ENCODE measurements at regions of chr19 and their contacts with region 1.

Region 1: GRCh38 chr19:55632463-55632834 is 8.1 kb upstream of the ZNF784 start:
- DNase-seq: peak; percentile 91
- H3K4me3 ChIP-seq: no peak overlapping the region
- H3K27ac ChIP-seq: no peak overlapping the region
- H3K4me1 ChIP-seq: peaks cover 12% of the 10 kb centered on the region
- H3K27me3 ChIP-seq: no peaks in the 10 kb centered on the region
- CTCF ChIP-seq: peak; percentile 67 to 75
- POLR2A ChIP-seq: no peak

Region 2: GRCh38 chr19:55146078-55146704 is 486.3 kb before region 1 on chr19:
- CTCF ChIA-PET with region 1: interaction called, 9 read pairs
- POLR2A ChIA-PET with region 1: no interaction called
- dilution Hi-C with region 1: no loop called
- intact Hi-C with region 1: loop called (anchors 5 kb)
- DNase-seq: no peak
- H3K4me3 ChIP-seq: no peak overlapping the region
- H3K27ac ChIP-seq: no peak overlapping the region
- H3K4me1 ChIP-seq: no peaks in the 10 kb centered on the region
- H3K27me3 ChIP-seq: peaks cover 7 to 15% of the 10 kb centered on the region in 2 experiments
- CTCF ChIP-seq: peak; percentile 34 to 55
- POLR2A ChIP-seq: no peak

Region 3: DNA sequence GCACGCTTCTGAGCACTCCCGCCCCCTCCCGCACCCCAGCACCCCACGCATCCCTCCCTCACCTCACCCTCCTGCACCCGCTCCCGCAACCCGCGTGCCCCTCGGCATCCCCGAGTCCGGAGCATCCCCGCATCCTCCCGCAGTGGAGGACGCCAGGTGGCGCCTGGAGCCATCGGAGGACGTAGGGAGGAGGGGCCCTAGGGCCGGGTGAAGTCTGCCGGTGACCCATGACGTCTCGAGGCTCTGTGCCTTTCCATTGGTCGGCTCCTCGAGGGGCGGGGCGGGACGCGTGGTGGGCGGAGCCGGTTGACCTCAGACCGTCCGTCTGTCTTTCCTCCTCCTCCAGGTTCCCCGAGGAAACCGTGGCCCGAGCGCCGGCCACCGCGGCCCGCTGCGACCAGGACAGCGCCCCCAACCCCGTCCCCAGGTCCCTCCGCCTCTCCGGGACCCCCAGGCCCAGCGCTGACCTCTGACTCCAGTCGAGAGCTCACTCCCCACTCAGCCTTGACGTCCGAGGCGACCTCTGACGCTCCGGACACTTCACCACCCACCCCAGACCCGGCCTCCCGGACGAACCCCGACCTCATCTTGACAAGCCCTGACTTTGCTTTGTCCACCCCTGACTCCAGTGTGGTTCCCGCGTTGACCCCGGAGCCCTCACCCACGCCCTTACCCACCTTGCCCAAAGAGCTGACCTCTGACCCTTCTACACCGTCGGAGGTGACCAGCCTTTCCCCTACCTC is 115.4 kb before region 1 on chr19:
- CTCF ChIA-PET with region 1: interaction called, 27 read pairs
- POLR2A ChIA-PET with region 1: interaction called, 3 read pairs
- dilution Hi-C with region 1: no loop called
- intact Hi-C with region 1: loop called (anchors 1 kb)
- DNase-seq: peak; percentile 89
- H3K4me3 ChIP-seq: peak overlapping the region in 2 of 3 experiments; percentile 15 to 40
- H3K27ac ChIP-seq: no peak overlapping the region
- H3K4me1 ChIP-seq: no peaks in the 10 kb centered on the region
- H3K27me3 ChIP-seq: no peaks in the 10 kb centered on the region
- CTCF ChIP-seq: peak; percentile 76 to 95
- POLR2A ChIP-seq: peak; percentile 17

Region 4: GRCh38 chr19:55536951-55537740 is 95.3 kb before region 1 on chr19 and contains the start of gene SBK2:
- CTCF ChIA-PET with region 1: no interaction called
- POLR2A ChIA-PET with region 1: no interaction called
- dilution Hi-C with region 1: no loop called
- intact Hi-C with region 1: no loop called
- DNase-seq: no peak
- H3K4me3 ChIP-seq: no peak within 1 kb of the TSS
- H3K27ac ChIP-seq: no peak within 1 kb of the TSS
- H3K4me1 ChIP-seq: no peaks in the 10 kb centered on the region
- H3K27me3 ChIP-seq: no peaks in the 10 kb centered on the region
- CTCF ChIP-seq: peak in 1 of 2 donors; percentile 43
- POLR2A ChIP-seq: no peak
- total RNA-seq, gene SBK2: not detected in 2 replicates

Region 5: GRCh38 chr19:55605207-55605636 is 27.2 kb before region 1 on chr19:
- CTCF ChIA-PET with region 1: interaction called, 19 read pairs
- POLR2A ChIA-PET with region 1: interaction called, 3 read pairs
- dilution Hi-C with region 1: no loop called
- intact Hi-C with region 1: loop called (anchors 1 kb)
- DNase-seq: peak; percentile 98
- H3K4me3 ChIP-seq: peak overlapping the region in 1 of 3 experiments; percentile 96
- H3K27ac ChIP-seq: peak overlapping the region; percentile 76
- H3K4me1 ChIP-seq: peaks cover 21% of the 10 kb centered on the region
- H3K27me3 ChIP-seq: no peaks in the 10 kb centered on the region
- CTCF ChIP-seq: no peak
- POLR2A ChIP-seq: peak; percentile 59

Region 6: DNA sequence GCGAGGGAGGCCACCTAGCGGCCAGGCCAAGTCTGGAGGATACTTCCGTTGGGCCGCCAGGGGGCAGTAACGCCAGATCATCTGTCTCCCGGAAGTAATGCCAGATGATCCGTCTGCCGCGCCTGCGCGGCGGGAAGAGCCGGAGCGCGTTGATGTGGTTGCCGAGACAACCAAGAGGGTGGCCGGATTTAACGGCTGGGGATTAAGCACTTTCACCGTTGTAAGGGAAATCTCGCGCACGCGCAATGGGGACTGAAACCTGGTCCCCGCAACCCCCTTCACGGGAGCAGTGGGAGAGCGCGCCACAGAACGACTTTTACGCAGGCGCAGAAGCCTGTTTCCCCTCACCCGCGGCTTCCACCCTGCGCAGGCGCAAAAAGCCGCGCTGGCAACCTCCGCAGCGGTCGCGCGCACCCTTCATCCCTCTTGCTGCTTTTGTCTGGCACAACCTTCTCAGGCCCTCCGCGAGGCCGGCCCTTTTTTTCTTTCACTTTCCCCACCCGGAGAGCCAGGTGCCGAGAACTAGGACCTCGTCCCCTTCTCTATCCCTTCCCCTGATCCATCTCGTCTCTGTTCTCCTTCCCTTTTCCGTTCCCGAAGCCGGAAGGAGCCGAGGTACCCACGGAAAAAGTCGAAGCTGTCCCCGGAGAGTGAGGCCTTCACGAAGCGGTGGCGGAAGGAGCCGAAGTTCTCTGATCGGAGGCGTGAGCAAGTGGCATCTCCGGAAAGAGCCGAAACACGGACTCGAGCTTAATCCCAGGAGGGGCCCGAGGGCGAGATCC is 21.5 kb after region 1 on chr19:
- CTCF ChIA-PET with region 1: interaction called, 28 read pairs
- POLR2A ChIA-PET with region 1: no interaction called
- dilution Hi-C with region 1: no loop called
- intact Hi-C with region 1: loop called (anchors 1 kb)
- DNase-seq: peak; percentile 99
- H3K4me3 ChIP-seq: peak overlapping the region; percentile 86 to 98 (median 89)
- H3K27ac ChIP-seq: peak overlapping the region; percentile 99
- H3K4me1 ChIP-seq: peaks cover 25% of the 10 kb centered on the region
- H3K27me3 ChIP-seq: no peaks in the 10 kb centered on the region
- CTCF ChIP-seq: peak; percentile 100
- POLR2A ChIP-seq: peak; percentile 79

Region 7: DNA sequence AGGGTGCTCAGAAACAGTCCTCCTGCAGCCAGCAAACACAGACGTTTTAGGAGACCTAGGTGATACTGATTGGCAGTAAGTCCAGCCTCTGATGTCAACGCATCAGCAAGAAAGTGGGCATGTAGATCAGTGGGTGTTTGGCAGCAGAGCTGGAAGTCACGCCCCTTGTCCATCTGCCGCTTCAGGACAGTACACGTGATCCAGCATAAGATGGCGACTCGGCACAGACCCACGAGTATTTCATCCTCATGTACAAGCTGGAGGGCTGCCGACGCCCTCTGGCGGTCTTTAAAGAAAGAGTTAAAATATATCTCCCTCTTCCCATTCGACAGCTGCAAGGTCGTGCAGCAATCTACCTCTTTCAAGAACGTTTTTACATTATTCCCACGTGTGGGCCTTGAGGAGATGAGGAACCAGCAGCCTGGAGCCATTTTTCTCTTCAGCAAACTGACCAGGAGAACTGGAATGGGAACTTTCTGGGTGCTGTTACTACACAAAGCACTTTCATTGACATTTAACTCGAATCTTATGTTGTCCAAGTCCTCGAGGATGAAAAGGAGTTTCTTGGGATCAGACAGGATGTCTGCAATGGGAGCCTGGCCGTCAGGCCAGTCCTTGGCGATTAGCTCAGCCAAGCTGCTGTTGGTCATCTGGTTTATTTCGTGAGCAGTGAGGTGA is 177.1 kb after region 1 on chr19:
- CTCF ChIA-PET with region 1: interaction called, 86 read pairs
- POLR2A ChIA-PET with region 1: no interaction called
- dilution Hi-C with region 1: no loop called
- intact Hi-C with region 1: no loop called
- DNase-seq: peak; percentile 43
- H3K4me3 ChIP-seq: no peak overlapping the region
- H3K27ac ChIP-seq: no peak overlapping the region
- H3K4me1 ChIP-seq: no peaks in the 10 kb centered on the region
- H3K27me3 ChIP-seq: no peaks in the 10 kb centered on the region
- CTCF ChIP-seq: peak; percentile 36 to 42
- POLR2A ChIP-seq: no peak

Region 8: DNA sequence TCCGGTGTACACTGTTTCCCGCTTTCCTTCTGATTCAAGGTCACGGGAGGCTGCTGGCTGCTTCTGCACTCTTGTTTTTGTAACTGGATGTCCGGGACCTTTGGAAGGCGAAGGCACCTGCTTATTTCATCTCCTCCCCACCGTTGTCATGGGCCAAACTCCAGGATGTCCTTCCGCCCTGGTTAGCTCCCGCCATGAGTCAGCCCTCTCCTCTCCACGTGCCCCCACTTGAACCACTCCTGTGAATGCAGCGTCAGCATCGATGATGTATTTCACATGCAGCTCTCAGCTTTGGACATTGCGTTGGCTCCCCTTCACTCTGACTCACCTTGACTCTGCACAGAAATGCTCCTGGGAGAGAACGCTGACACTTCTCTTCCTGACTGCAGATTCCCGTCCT is 537.8 kb after region 1 on chr19:
- CTCF ChIA-PET with region 1: interaction called, 14 read pairs
- POLR2A ChIA-PET with region 1: no interaction called
- dilution Hi-C with region 1: no loop called
- intact Hi-C with region 1: no loop called
- DNase-seq: no peak
- H3K4me3 ChIP-seq: no peak overlapping the region
- H3K27ac ChIP-seq: no peak overlapping the region
- H3K4me1 ChIP-seq: no peaks in the 10 kb centered on the region
- H3K27me3 ChIP-seq: peaks cover 0 to 2% of the 10 kb centered on the region in 2 experiments
- CTCF ChIP-seq: no peak
- POLR2A ChIP-seq: no peak